HepG2 (cell line): ENCODE measurements at regions of chr7 and their contacts with region 1.

Region 1: GRCh38 chr7:45938626-45939302 is 17.7 kb upstream of the IGFBP3 start:
- DNase-seq: peak; percentile 44
- ATAC-seq: peak; percentile 99
- H3K4me3 ChIP-seq: peak overlapping the region in 1 of 3 experiments; percentile 26; a peak in 1 of 6 replicates
- H3K27ac ChIP-seq: no peak overlapping the region
- H3K4me1 ChIP-seq: peaks cover 21% of the 10 kb centered on the region; the same call in 1 of the 2 replicates
- H3K27me3 ChIP-seq: peaks cover 1 to 3% of the 10 kb centered on the region in 2 experiments; a peak in 2 of 5 replicates
- CTCF ChIP-seq: peak; percentile 82
- EP300 ChIP-seq: no peak
- POLR2A ChIP-seq: no peak
- RAD21 ChIP-seq: peak; percentile 78

Region 2: GRCh38 chr7:46058086-46058823 is 119.5 kb after region 1 on chr7:
- CTCF ChIA-PET with region 1: no interaction called
- POLR2A ChIA-PET with region 1: no interaction called
- in situ Hi-C with region 1: no loop called
- intact Hi-C with region 1: loop called (anchors 2 kb)
- DNase-seq: no peak
- ATAC-seq: no peak
- H3K4me3 ChIP-seq: no peak overlapping the region
- H3K27ac ChIP-seq: no peak overlapping the region
- H3K4me1 ChIP-seq: no peaks in the 10 kb centered on the region
- H3K27me3 ChIP-seq: no peaks in the 10 kb centered on the region; a peak in 1 of 5 replicates
- CTCF ChIP-seq: no peak
- EP300 ChIP-seq: no peak
- POLR2A ChIP-seq: no peak
- RAD21 ChIP-seq: no peak

Region 3: DNA sequence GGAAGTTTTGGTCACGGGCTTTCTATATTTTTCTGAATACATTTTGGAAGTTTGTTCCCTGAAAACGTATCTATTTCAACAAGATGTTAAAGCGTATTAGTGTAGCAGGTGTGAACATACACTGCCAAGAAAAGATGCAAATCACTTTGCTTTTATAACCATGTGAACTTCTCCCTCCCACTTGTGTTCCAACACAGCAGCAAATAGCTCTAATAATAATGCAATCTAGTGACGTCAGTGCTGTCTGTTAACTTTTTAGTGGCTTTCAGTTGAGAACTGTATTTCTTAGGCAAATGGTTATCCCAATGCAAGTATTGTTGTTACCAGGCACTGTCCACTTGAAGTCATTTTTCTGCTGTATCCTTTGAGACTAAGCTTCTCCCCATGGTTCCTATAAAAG is 170.7 kb after region 1 on chr7:
- CTCF ChIA-PET with region 1: no interaction called
- POLR2A ChIA-PET with region 1: no interaction called
- in situ Hi-C with region 1: loop called (anchors 25 kb)
- intact Hi-C with region 1: loop called (anchors 1 kb)
- DNase-seq: no peak
- ATAC-seq: no peak
- H3K4me3 ChIP-seq: no peak overlapping the region
- H3K27ac ChIP-seq: no peak overlapping the region
- H3K4me1 ChIP-seq: no peaks in the 10 kb centered on the region
- H3K27me3 ChIP-seq: peaks cover 0 to 8% of the 10 kb centered on the region in 2 experiments; a peak in 3 of 5 replicates
- CTCF ChIP-seq: no peak
- EP300 ChIP-seq: no peak
- POLR2A ChIP-seq: no peak
- RAD21 ChIP-seq: no peak

Region 4: GRCh38 chr7:46115410-46115809 is 176.6 kb after region 1 on chr7:
- CTCF ChIA-PET with region 1: no interaction called
- POLR2A ChIA-PET with region 1: no interaction called
- in situ Hi-C with region 1: loop called (anchors 25 kb)
- intact Hi-C with region 1: no loop called
- DNase-seq: no peak
- ATAC-seq: no peak
- H3K4me3 ChIP-seq: no peak overlapping the region
- H3K27ac ChIP-seq: no peak overlapping the region
- H3K4me1 ChIP-seq: no peaks in the 10 kb centered on the region
- H3K27me3 ChIP-seq: no peaks in the 10 kb centered on the region
- CTCF ChIP-seq: no peak
- EP300 ChIP-seq: no peak
- POLR2A ChIP-seq: no peak
- RAD21 ChIP-seq: no peak